ENCODE measurements at regions of chr19 and their contacts with region 1.

Region 1: GRCh38 chr19:44723952-44724319 is 24.6 kb upstream of the BCL3 start:
- DNase-seq: no peak
- H3K4me3 ChIP-seq: no peak overlapping the region
- H3K27me3 ChIP-seq: no peaks in the 10 kb centered on the region
- CTCF ChIP-seq: peak; percentile 98

Region 2: DNA sequence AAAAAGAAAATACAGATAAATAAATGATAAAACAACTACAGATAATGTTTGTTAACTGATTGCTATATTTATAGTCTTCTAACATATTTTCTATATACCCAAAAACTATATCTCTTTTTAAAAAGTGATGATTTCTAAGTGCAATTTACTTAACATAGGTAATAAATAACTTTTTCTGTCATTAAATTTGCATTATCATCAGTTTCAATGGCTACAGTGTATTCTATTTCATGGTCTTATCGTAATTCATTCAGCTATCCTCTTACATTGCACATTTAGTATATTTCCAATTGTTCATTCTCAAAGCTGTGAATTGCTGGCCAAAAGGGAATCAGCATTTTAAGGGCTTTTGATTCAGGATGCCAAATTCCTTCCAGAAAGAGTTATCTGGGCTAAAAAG is 227.2 kb before region 1 on chr19:
- CTCF ChIA-PET with region 1: no interaction called
- POLR2A ChIA-PET with region 1: no interaction called
- DNase-seq: no peak
- H3K4me3 ChIP-seq: no peak overlapping the region
- H3K27me3 ChIP-seq: no peaks in the 10 kb centered on the region
- CTCF ChIP-seq: no peak

Region 3: GRCh38 chr19:44702551-44703176 is 21.3 kb before region 1 on chr19:
- CTCF ChIA-PET with region 1: interaction called, 15 read pairs
- POLR2A ChIA-PET with region 1: no interaction called
- DNase-seq: no peak
- H3K4me3 ChIP-seq: no peak overlapping the region
- H3K27me3 ChIP-seq: peaks cover 2% of the 10 kb centered on the region; the same call in 1 of the 2 replicates
- CTCF ChIP-seq: no peak

Region 4: DNA sequence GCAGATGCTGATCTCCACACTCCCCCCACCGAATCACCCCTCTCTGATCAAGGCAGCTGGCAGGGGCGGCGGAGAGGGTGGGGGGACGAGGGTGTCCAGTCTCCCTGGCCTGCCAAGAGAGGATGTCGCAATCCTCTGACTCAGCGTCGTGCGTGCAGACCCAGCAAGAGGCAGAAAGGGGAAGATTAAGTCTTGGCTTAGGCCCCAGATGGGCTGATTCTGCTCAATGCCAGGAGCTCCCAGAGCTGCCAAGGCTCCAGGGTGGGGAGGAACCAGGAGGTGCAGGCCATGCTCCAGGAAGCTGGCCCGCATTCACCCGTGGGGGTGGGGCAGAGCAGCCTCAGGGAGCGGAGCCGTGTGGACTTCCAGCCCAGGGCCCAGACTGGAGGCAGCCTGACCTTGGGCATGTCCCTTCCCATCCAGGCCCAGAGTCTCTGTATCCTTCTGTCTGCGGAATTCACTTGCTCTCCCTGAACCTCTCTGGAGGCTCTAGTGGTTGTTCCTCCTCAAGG is 18.0 kb after region 1 on chr19:
- CTCF ChIA-PET with region 1: interaction called, 69 read pairs
- POLR2A ChIA-PET with region 1: no interaction called
- DNase-seq: peak; percentile 98
- H3K4me3 ChIP-seq: no peak overlapping the region
- H3K27me3 ChIP-seq: no peaks in the 10 kb centered on the region
- CTCF ChIP-seq: no peak

Region 5: GRCh38 chr19:44764975-44765948 is 41.3 kb after region 1 on chr19:
- CTCF ChIA-PET with region 1: interaction called, 369 read pairs
- POLR2A ChIA-PET with region 1: interaction called, 6 read pairs
- DNase-seq: no peak
- H3K4me3 ChIP-seq: no peak overlapping the region
- H3K27me3 ChIP-seq: no peaks in the 10 kb centered on the region
- CTCF ChIP-seq: no peak

Region 6: GRCh38 chr19:44808463-44809371 is 84.8 kb after region 1 on chr19 and contains the start of gene BCAM:
- CTCF ChIA-PET with region 1: interaction called, 15 read pairs
- POLR2A ChIA-PET with region 1: no interaction called
- DNase-seq: no peak
- H3K4me3 ChIP-seq: peak within 1 kb of the TSS; percentile 66
- H3K27me3 ChIP-seq: peaks cover 3% of the 10 kb centered on the region; the same call in 1 of the 2 replicates
- CTCF ChIP-seq: no peak
- polyA plus RNA-seq, gene BCAM: 4.7 and 8.9 TPM in 2 replicates